ENCODE measurements at regions of chr18 and their contacts with region 1.

Region 1: DNA sequence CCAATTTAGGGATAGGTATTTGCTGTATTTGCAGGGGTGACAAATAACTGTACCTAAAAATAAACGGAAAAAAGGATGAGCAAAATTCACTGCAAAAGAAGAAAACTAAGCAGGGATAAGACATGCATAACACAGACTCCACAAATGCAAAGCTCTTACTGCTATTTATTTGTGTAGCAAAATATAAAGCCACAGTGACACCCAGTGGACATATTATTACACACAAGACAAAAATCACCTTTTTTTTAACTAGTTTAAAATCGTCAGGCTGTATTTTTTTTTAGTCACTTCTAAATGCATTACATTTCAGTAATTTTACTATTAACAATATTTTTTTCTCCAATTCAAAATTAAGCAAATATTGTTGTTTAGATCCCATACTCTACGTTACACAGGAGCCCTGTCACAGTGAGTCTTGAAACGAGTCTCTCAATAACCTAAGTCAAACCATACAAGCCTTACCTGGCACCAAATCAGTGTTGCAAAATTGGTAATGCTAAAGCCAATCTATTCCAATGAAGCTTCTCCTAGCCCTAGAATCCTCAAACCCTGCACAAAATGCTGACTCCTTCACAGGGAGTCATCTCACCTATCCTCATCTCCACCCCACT is 23.7 kb downstream of the METTL4 start:
- DNase-seq: peak; percentile 65
- H3K4me3 Mint-ChIP-seq: no peak overlapping the region
- H3K27ac Mint-ChIP-seq: no peak overlapping the region
- H3K4me1 Mint-ChIP-seq: no peaks in the 10 kb centered on the region
- H3K27me3 Mint-ChIP-seq: no peaks in the 10 kb centered on the region

Region 2: GRCh38 chr18:2104620-2105462 is 442.7 kb before region 1 on chr18:
- intact Hi-C with region 1: loop called (anchors 2 kb)
- DNase-seq: peak; percentile 83
- H3K4me3 Mint-ChIP-seq: no peak overlapping the region
- H3K27ac Mint-ChIP-seq: no peak overlapping the region
- H3K4me1 Mint-ChIP-seq: no peaks in the 10 kb centered on the region
- H3K27me3 Mint-ChIP-seq: peaks cover 4% of the 10 kb centered on the region

Region 3: DNA sequence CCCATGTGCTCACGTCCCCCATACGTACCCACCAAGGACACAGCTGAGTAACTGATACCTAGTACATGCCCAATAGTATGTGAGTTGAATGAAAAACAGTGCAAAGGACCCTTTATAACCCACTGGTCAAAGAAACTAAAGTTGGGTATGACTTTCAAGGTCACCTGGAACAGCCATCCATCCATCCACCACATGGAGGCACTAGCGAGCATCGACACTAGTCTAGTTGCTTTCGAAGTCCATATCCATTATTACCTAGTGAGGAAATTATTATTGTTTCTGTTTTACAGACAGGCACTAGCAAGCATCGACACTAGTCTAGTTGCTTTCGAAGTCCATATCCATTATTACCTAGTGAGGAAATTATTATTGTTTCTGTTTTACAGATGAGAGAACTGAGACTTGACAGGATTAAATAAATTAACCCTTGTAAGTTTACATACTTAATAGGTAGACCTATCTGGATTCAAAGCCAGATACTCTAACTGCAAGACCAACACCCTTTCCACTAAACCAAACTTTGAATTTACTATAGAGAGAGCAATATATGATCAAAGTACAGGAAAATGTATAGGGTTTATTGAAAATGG is 209.9 kb before region 1 on chr18:
- intact Hi-C with region 1: loop called (anchors 2 kb)
- DNase-seq: peak; percentile 81
- H3K4me3 Mint-ChIP-seq: no peak overlapping the region
- H3K27ac Mint-ChIP-seq: no peak overlapping the region
- H3K4me1 Mint-ChIP-seq: peaks cover 5% of the 10 kb centered on the region
- H3K27me3 Mint-ChIP-seq: peaks cover 8% of the 10 kb centered on the region

Region 4: DNA sequence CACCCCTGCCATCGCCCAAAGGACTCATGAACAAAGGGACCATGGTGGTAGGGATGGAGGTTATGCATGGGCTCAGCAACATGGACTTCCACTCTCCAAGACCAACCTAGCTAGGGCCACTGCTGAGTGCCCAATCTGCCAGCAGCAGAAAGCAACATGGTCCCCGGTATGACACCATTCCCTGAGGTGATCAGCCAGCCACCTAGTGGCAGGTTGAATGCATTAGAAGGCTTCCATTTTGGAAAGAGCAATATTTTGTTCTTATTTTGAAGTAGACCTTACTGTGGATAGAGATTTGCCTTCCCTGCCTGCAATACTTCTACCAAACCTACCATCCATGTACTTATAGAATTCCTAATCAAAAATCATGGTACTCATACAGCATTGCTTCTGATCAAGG is 76.1 kb before region 1 on chr18:
- intact Hi-C with region 1: no loop called
- DNase-seq: no peak
- H3K4me3 Mint-ChIP-seq: no peak overlapping the region
- H3K27ac Mint-ChIP-seq: no peak overlapping the region
- H3K4me1 Mint-ChIP-seq: no peaks in the 10 kb centered on the region
- H3K27me3 Mint-ChIP-seq: peaks cover 8% of the 10 kb centered on the region

Measured in activated CD4-positive, alpha-beta T cell treated with anti-CD3 and anti-CD28 coated beads, Interleukin-2, amount 10 ng/mL, durations not matched to agents 24 days and 14 days (primary cell).